Activated T-helper 1 cell treated with anti-CD3 and anti-CD28 coated beads, Interleukin-12 subunit alpha, Interleukin-12 subunit beta, Interleukin-2, Interleukin-4 antibody, amounts not matched to agents 30 ng/mL and 10 ng/mL and 1 ng/mL, durations not matched to agents 14 hours and 24 hours and 36 hours (primary cell): ENCODE measurements at regions of chr7 and their contacts with region 1.

Region 1: DNA sequence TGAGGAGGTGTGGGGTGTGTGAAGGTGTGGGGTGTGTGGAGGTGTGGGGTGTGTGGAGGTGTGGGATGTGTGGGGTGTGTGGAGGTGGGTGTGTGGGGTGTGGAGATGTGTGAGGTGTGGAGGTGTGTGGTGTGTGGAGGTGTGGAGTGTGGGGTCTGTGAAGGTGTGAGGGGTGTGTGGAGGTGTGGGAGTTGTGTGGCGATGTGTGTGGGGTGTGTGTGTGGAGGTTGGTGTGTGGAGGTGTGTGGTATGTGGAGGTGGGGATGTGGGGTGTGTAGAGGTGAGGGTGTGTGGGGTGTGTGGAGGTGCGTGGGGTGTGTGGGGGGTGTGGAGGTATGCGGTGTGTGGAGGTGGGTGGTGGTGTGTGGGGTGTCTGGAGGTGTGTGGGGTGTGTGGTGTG is 34.8 kb downstream of the SPDYE17 start:
- DNase-seq: no peak
- H3K4me3 Mint-ChIP-seq: no peak overlapping the region
- H3K27ac Mint-ChIP-seq: no peak overlapping the region
- H3K4me1 Mint-ChIP-seq: no peaks in the 10 kb centered on the region
- H3K27me3 Mint-ChIP-seq: no peaks in the 10 kb centered on the region

Region 2: DNA sequence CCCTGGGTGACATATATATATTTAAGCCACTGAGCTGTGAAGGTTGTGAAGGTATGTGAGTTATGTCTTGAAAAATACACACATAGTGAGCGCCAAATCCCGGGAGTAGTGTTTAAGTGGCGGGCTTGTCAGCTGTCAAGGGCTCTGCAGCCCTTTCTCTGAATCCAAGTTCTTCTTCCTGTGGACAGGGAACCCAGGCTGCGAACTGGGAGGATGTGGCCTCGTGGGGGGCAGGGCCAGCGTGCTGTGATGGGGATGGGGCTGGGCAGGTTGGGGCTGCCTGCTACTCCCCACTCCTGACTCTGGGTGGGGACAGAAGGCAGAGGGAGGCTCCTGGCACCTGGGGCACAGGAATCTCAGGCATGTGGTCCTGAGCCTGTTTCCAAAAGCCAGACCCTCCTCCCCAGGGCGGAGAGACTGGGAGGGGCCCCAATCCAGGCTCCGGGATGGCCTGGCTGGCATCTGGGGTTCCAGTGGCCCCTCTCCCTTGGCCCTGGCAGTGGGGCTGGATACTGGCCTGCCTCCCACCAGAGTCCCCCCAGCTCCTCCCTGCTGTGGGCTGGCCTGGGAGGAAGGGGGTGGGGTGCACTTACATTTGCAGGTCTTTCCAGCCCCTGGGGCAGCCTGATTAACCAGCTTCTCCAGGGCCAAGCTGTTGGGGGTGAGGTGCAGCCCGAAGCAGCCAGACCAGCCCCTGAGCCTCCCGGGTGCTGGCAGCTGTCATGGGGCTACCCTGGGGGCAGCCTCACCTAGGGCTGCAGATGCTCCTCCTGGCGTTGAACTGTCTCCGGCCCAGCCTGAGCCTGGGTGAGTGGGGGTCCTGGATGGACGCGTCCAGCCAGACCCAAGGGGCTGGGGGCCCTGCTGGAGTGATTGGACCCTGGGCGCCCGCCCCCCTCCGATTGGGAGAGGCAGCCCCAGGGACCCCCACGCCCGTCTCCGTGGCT is 487.2 kb before region 1 on chr7 and contains the start of gene UPK3B:
- intact Hi-C with region 1: loop called (anchors 10 kb)
- DNase-seq: no peak
- H3K4me3 Mint-ChIP-seq: no peak within 1 kb of the TSS
- H3K27ac Mint-ChIP-seq: no peak within 1 kb of the TSS
- H3K4me1 Mint-ChIP-seq: peaks cover 5% of the 10 kb centered on the region
- H3K27me3 Mint-ChIP-seq: no peaks in the 10 kb centered on the region
- total RNA-seq, gene UPK3B: 1.1 and 1.2 TPM in 2 replicates